CD4-positive, alpha-beta memory T cell (primary cell): ENCODE measurements at regions of chr22 and their contacts with region 1.

Region 1: GRCh38 chr22:21629262-21630149 is at the start of gene YDJC:
- DNase-seq: peak; percentile 93 to 95 (median 93)
- H3K4me3 ChIP-seq: peak within 1 kb of the TSS; percentile 78 to 92
- H3K4me3 Mint-ChIP-seq: peak within 1 kb of the TSS; percentile 92 to 95 (median 94)
- H3K27ac ChIP-seq: peak within 1 kb of the TSS; percentile 87
- H3K27ac Mint-ChIP-seq: peak within 1 kb of the TSS; percentile 89 to 98 (median 96)
- H3K4me1 ChIP-seq: peaks cover 64% of the 10 kb centered on the region
- H3K4me1 Mint-ChIP-seq: peaks cover 25 to 65% (median 43%) of the 10 kb centered on the region in 4 donors
- H3K27me3 ChIP-seq: no peaks in the 10 kb centered on the region
- H3K27me3 Mint-ChIP-seq: no peaks in the 10 kb centered on the region
- total RNA-seq, gene YDJC: 45.7 to 46.0 TPM

Region 2: GRCh38 chr22:21567456-21568346 is 61.8 kb before region 1 on chr22 and contains the start of gene UBE2L3:
- CTCF ChIA-PET with region 1: interaction called, 9 read pairs
- POLR2A ChIA-PET with region 1: interaction called, 12 read pairs
- intact Hi-C with region 1: loop called (anchors 1 kb)
- DNase-seq: peak; percentile 81 to 87 (median 83)
- H3K4me3 ChIP-seq: peak within 1 kb of the TSS; percentile 63 to 93
- H3K4me3 Mint-ChIP-seq: peak within 1 kb of the TSS; percentile 87 to 94 (median 92)
- H3K27ac ChIP-seq: peak within 1 kb of the TSS; percentile 84
- H3K27ac Mint-ChIP-seq: peak within 1 kb of the TSS; percentile 91 to 96 (median 95)
- H3K4me1 ChIP-seq: peaks cover 45% of the 10 kb centered on the region
- H3K4me1 Mint-ChIP-seq: peaks cover 31 to 44% (median 39%) of the 10 kb centered on the region in 4 donors
- H3K27me3 ChIP-seq: no peaks in the 10 kb centered on the region
- H3K27me3 Mint-ChIP-seq: no peaks in the 10 kb centered on the region
- total RNA-seq, gene UBE2L3: 39.2 to 39.3 TPM

Region 3: GRCh38 chr22:21615731-21616130 is 13.8 kb before region 1 on chr22:
- CTCF ChIA-PET with region 1: interaction called, 13 read pairs
- POLR2A ChIA-PET with region 1: interaction called, 8 read pairs
- intact Hi-C with region 1: no loop called
- DNase-seq: no peak
- H3K4me3 ChIP-seq: no peak overlapping the region
- H3K4me3 Mint-ChIP-seq: no peak overlapping the region
- H3K27ac ChIP-seq: no peak overlapping the region
- H3K27ac Mint-ChIP-seq: peak overlapping the region in 3 of 7 donors; percentile 17 to 60 (median 26)
- H3K4me1 ChIP-seq: peaks cover 4% of the 10 kb centered on the region
- H3K4me1 Mint-ChIP-seq: peaks cover 10 to 38% (median 17%) of the 10 kb centered on the region in 4 donors
- H3K27me3 ChIP-seq: no peaks in the 10 kb centered on the region
- H3K27me3 Mint-ChIP-seq: no peaks in the 10 kb centered on the region

Region 4: GRCh38 chr22:21652010-21652546 is 22.6 kb after region 1 on chr22:
- CTCF ChIA-PET with region 1: interaction called, 245 read pairs
- POLR2A ChIA-PET with region 1: interaction called, 201 read pairs
- intact Hi-C with region 1: no loop called
- DNase-seq: peak; percentile 71 to 88 (median 75)
- H3K4me3 ChIP-seq: peak overlapping the region; percentile 56 to 74
- H3K4me3 Mint-ChIP-seq: peak overlapping the region; percentile 81 to 95 (median 88)
- H3K27ac ChIP-seq: peak overlapping the region; percentile 42
- H3K27ac Mint-ChIP-seq: peak overlapping the region in 6 of 7 donors; percentile 13 to 87 (median 36)
- H3K4me1 ChIP-seq: peaks cover 31% of the 10 kb centered on the region
- H3K4me1 Mint-ChIP-seq: peaks cover 13 to 32% (median 22%) of the 10 kb centered on the region in 4 donors
- H3K27me3 ChIP-seq: no peaks in the 10 kb centered on the region
- H3K27me3 Mint-ChIP-seq: no peaks in the 10 kb centered on the region

Region 5: DNA sequence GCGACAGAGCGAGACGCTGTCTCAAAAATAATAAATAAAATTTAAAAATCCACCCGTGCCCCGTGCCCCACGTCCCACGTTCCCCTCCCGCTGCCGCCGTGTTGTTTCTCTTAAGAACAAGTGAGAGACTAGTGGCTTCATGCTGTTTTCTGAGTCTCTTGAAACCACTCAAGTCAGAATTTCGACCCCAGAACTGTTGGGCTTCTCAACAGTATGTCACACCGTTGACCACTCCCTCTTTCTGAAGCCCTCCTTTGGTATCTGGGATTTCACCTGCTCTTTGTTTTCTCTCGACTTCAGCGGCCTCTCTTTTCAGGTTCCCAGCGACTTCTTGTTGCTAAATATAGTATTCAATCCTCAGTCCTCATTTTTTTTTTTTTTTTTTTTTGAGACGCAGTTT is 37.3 kb after region 1 on chr22:
- CTCF ChIA-PET with region 1: interaction called, 15 read pairs
- POLR2A ChIA-PET with region 1: interaction called, 19 read pairs
- intact Hi-C with region 1: no loop called
- DNase-seq: no peak
- H3K4me3 ChIP-seq: peak overlapping the region; percentile 43 to 97
- H3K4me3 Mint-ChIP-seq: peak overlapping the region; percentile 89 to 100 (median 97)
- H3K27ac ChIP-seq: peak overlapping the region; percentile 83
- H3K27ac Mint-ChIP-seq: peak overlapping the region; percentile 52 to 99 (median 76)
- H3K4me1 ChIP-seq: peaks cover 25% of the 10 kb centered on the region
- H3K4me1 Mint-ChIP-seq: peaks cover 19 to 45% (median 32%) of the 10 kb centered on the region in 4 donors
- H3K27me3 ChIP-seq: no peaks in the 10 kb centered on the region
- H3K27me3 Mint-ChIP-seq: no peaks in the 10 kb centered on the region

Region 6: GRCh38 chr22:22380098-22381030 is 750.9 kb after region 1 on chr22:
- CTCF ChIA-PET with region 1: no interaction called
- POLR2A ChIA-PET with region 1: no interaction called
- intact Hi-C with region 1: no loop called
- DNase-seq: no peak
- H3K4me3 ChIP-seq: no peak overlapping the region
- H3K4me3 Mint-ChIP-seq: peak overlapping the region in 1 of 8 donors; percentile 39
- H3K27ac ChIP-seq: no peak overlapping the region
- H3K27ac Mint-ChIP-seq: no peak overlapping the region
- H3K4me1 ChIP-seq: no peaks in the 10 kb centered on the region
- H3K4me1 Mint-ChIP-seq: no peaks in the 10 kb centered on the region
- H3K27me3 ChIP-seq: no peaks in the 10 kb centered on the region
- H3K27me3 Mint-ChIP-seq: peaks cover 16 to 39% of the 10 kb centered on the region in 2 donors